ENCODE measurements at regions of chr9 and their contacts with region 1.

Region 1: DNA sequence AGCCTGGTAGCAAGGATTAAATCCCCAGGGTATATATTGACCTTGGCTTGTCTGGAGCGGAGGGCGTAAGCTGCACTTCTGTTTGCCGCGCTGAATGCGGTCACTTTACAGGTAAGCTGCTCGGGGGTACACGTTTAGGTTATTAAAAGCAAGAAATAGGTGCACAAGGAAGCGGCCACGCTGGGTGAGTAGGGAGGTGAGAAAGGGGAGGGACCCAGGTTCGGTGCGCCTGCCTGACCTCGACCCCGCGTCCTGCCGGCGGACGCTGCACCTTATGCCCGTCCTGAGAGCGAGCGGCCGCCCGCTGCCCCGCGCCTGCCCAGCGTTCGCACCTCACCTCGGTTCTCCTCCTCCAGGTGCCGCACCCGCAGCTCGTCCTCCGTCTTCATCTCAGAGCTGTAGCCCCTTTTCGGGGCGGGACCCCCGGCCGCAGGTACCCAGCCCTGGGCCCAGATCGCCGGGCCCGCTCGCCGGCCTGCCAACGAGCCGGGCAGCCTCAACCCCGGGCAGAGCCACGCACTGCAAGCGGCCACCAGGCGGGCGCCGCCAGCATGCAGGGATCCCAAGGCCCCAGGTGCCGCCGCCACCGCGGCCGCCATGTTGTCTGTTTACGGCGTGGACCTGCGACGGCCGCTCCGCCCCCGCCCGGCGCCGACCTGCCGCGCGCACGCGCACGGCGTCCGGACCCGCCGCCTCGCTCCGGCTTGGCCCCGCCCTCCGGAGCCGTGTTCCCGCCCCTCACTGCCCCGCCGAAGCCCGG is at the start of gene AUH:
- DNase-seq: peak; percentile 85
- H3K4me3 Mint-ChIP-seq: peak within 1 kb of the TSS; percentile 97
- H3K27ac Mint-ChIP-seq: peak within 1 kb of the TSS; percentile 94
- H3K4me1 Mint-ChIP-seq: peaks cover 48% of the 10 kb centered on the region
- H3K27me3 Mint-ChIP-seq: no peaks in the 10 kb centered on the region
- total RNA-seq, gene AUH: 50.4 and 53.3 TPM in 2 replicates

Region 2: GRCh38 chr9:91071185-91071990 is 290.1 kb before region 1 on chr9:
- intact Hi-C with region 1: loop called (anchors 1 kb)
- DNase-seq: peak; percentile 35
- H3K4me3 Mint-ChIP-seq: peak overlapping the region; percentile 68
- H3K27ac Mint-ChIP-seq: peak overlapping the region; percentile 96
- H3K4me1 Mint-ChIP-seq: peaks cover 17% of the 10 kb centered on the region
- H3K27me3 Mint-ChIP-seq: peaks cover 2% of the 10 kb centered on the region

Region 3: DNA sequence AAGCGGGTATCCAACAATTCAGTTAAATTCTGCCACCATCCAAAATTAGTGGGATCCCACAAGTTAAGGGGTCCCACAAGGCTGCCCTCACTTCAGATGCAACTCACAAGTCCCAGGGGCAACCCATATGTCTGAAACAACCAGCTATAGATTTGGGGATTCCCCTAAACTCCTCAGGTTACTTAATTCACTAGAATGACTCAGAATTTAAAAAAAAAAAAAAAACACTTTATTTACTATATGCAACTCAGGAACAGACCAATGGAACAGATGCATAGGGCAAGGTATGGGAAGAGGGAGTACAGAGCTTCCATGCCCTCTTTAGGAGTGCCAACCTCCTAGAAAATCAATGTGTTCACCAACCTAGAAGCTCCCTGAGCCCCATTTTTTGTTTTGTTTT is 14.8 kb before region 1 on chr9:
- intact Hi-C with region 1: loop called (anchors 1 kb)
- DNase-seq: no peak
- H3K4me3 Mint-ChIP-seq: no peak overlapping the region
- H3K27ac Mint-ChIP-seq: peak overlapping the region; percentile 67
- H3K4me1 Mint-ChIP-seq: peaks cover 56% of the 10 kb centered on the region
- H3K27me3 Mint-ChIP-seq: no peaks in the 10 kb centered on the region

Region 4: DNA sequence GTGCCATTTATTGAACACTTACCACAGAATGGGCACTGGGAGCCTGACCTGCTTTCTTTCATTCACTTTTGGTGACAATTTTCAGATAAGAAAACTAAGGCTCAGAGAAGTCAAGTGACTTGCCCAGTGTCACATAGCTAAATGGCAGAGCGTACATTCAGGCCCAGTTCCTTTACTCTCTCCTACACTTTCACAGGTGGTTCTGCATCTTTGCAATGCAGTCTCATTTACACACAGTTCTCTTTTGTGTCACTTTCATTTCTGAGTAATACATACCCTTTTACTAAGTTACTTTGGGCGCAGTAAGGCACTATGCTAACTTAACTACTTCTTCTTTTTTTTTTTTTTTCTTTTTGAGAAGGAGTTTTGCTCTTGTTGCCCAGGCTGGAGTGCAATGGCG is 53.8 kb after region 1 on chr9:
- intact Hi-C with region 1: loop called (anchors 1 kb)
- DNase-seq: no peak
- H3K4me3 Mint-ChIP-seq: no peak overlapping the region
- H3K27ac Mint-ChIP-seq: peak overlapping the region; percentile 85
- H3K4me1 Mint-ChIP-seq: peaks cover 92% of the 10 kb centered on the region
- H3K27me3 Mint-ChIP-seq: no peaks in the 10 kb centered on the region

Region 5: GRCh38 chr9:92115071-92115858 is 753.8 kb after region 1 on chr9 and contains the start of gene SPTLC1:
- intact Hi-C with region 1: loop called (anchors 10 kb)
- DNase-seq: peak; percentile 93
- H3K4me3 Mint-ChIP-seq: peak within 1 kb of the TSS; percentile 97
- H3K27ac Mint-ChIP-seq: peak within 1 kb of the TSS; percentile 95
- H3K4me1 Mint-ChIP-seq: peaks cover 47% of the 10 kb centered on the region
- H3K27me3 Mint-ChIP-seq: no peaks in the 10 kb centered on the region
- total RNA-seq, gene SPTLC1: 60.2 and 62.3 TPM in 2 replicates